Endothelial cell of umbilical vein (primary cell): ENCODE measurements at regions of chr2 and their contacts with region 1.

Region 1: GRCh38 chr2:223993621-223994232 is 36.5 kb downstream of the MRPL44 start:
- DNase-seq: peak; percentile 74
- H3K4me3 ChIP-seq: no peak overlapping the region
- H3K27ac ChIP-seq: no peak overlapping the region
- H3K4me1 ChIP-seq: no peaks in the 10 kb centered on the region
- H3K27me3 ChIP-seq: no peaks in the 10 kb centered on the region
- CTCF ChIP-seq: peak; percentile 69 to 75
- POLR2A ChIP-seq: no peak

Region 2: GRCh38 chr2:223976635-223977226 is 17.0 kb before region 1 on chr2:
- CTCF ChIA-PET with region 1: interaction called, 174 read pairs
- POLR2A ChIA-PET with region 1: no interaction called
- dilution Hi-C with region 1: no loop called
- intact Hi-C with region 1: no loop called
- DNase-seq: peak; percentile 81
- H3K4me3 ChIP-seq: no peak overlapping the region
- H3K27ac ChIP-seq: peak overlapping the region; percentile 20
- H3K4me1 ChIP-seq: peaks cover 6% of the 10 kb centered on the region
- H3K27me3 ChIP-seq: no peaks in the 10 kb centered on the region
- CTCF ChIP-seq: no peak
- POLR2A ChIP-seq: no peak

Region 3: GRCh38 chr2:224039124-224039940 is 45.6 kb after region 1 on chr2 and contains the start of gene SERPINE2:
- CTCF ChIA-PET with region 1: interaction called, 13 read pairs
- POLR2A ChIA-PET with region 1: no interaction called
- dilution Hi-C with region 1: no loop called
- intact Hi-C with region 1: loop called (anchors 1 kb)
- DNase-seq: peak; percentile 41
- H3K4me3 ChIP-seq: peak within 1 kb of the TSS; percentile 32 to 73 (median 41)
- H3K27ac ChIP-seq: no peak within 1 kb of the TSS
- H3K4me1 ChIP-seq: peaks cover 6% of the 10 kb centered on the region
- H3K27me3 ChIP-seq: peaks cover 29 to 41% of the 10 kb centered on the region in 2 experiments
- CTCF ChIP-seq: no peak
- POLR2A ChIP-seq: no peak
- total RNA-seq, gene SERPINE2: 8.8 and 15.5 TPM in 2 replicates

Region 4: GRCh38 chr2:224272237-224272910 is 278.6 kb after region 1 on chr2:
- CTCF ChIA-PET with region 1: interaction called, 39 read pairs
- POLR2A ChIA-PET with region 1: no interaction called
- dilution Hi-C with region 1: no loop called
- intact Hi-C with region 1: no loop called
- DNase-seq: no peak
- H3K4me3 ChIP-seq: no peak overlapping the region
- H3K27ac ChIP-seq: no peak overlapping the region
- H3K4me1 ChIP-seq: no peaks in the 10 kb centered on the region
- H3K27me3 ChIP-seq: peaks cover 6 to 7% of the 10 kb centered on the region in 2 experiments
- CTCF ChIP-seq: no peak
- POLR2A ChIP-seq: no peak

Region 5: GRCh38 chr2:224357098-224357901 is 363.6 kb after region 1 on chr2:
- CTCF ChIA-PET with region 1: interaction called, 21 read pairs
- POLR2A ChIA-PET with region 1: no interaction called
- dilution Hi-C with region 1: no loop called
- intact Hi-C with region 1: loop called (anchors 2 kb)
- DNase-seq: peak; percentile 82
- H3K4me3 ChIP-seq: no peak overlapping the region
- H3K27ac ChIP-seq: no peak overlapping the region
- H3K4me1 ChIP-seq: no peaks in the 10 kb centered on the region
- H3K27me3 ChIP-seq: peaks cover 0 to 3% of the 10 kb centered on the region in 2 experiments
- CTCF ChIP-seq: peak; percentile 44 to 68
- POLR2A ChIP-seq: no peak